Naive thymus-derived CD4-positive, alpha-beta T cell (primary cell): ENCODE measurements at regions of chr4 and their contacts with region 1.

Region 1: GRCh38 chr4:136103616-136104015 is 1428.7 kb downstream of the PCDH18 start:
- DNase-seq: no peak
- ATAC-seq: no peak
- H3K4me3 ChIP-seq: no peak overlapping the region
- H3K4me3 Mint-ChIP-seq: no peak overlapping the region
- H3K27ac ChIP-seq: no peak overlapping the region
- H3K27ac Mint-ChIP-seq: no peak overlapping the region
- H3K4me1 ChIP-seq: no peaks in the 10 kb centered on the region
- H3K4me1 Mint-ChIP-seq: no peaks in the 10 kb centered on the region
- H3K27me3 ChIP-seq: no peaks in the 10 kb centered on the region
- H3K27me3 Mint-ChIP-seq: no peaks in the 10 kb centered on the region

Region 2: GRCh38 chr4:136060768-136061167 is 42.8 kb before region 1 on chr4:
- CTCF ChIA-PET with region 1: no interaction called
- POLR2A ChIA-PET with region 1: no interaction called
- intact Hi-C with region 1: loop called in 1 of 2 experiments (anchors 1 kb)
- DNase-seq: no peak
- ATAC-seq: no peak
- H3K4me3 ChIP-seq: no peak overlapping the region
- H3K4me3 Mint-ChIP-seq: no peak overlapping the region
- H3K27ac ChIP-seq: no peak overlapping the region
- H3K27ac Mint-ChIP-seq: no peak overlapping the region
- H3K4me1 ChIP-seq: no peaks in the 10 kb centered on the region
- H3K4me1 Mint-ChIP-seq: no peaks in the 10 kb centered on the region
- H3K27me3 ChIP-seq: no peaks in the 10 kb centered on the region
- H3K27me3 Mint-ChIP-seq: no peaks in the 10 kb centered on the region

Region 3: GRCh38 chr4:137226898-137227297 is 1123.3 kb after region 1 on chr4:
- CTCF ChIA-PET with region 1: no interaction called
- POLR2A ChIA-PET with region 1: no interaction called
- intact Hi-C with region 1: no loop called
- DNase-seq: no peak
- ATAC-seq: no peak
- H3K4me3 ChIP-seq: no peak overlapping the region
- H3K4me3 Mint-ChIP-seq: no peak overlapping the region
- H3K27ac ChIP-seq: no peak overlapping the region
- H3K27ac Mint-ChIP-seq: no peak overlapping the region
- H3K4me1 ChIP-seq: no peaks in the 10 kb centered on the region
- H3K4me1 Mint-ChIP-seq: no peaks in the 10 kb centered on the region
- H3K27me3 ChIP-seq: no peaks in the 10 kb centered on the region
- H3K27me3 Mint-ChIP-seq: no peaks in the 10 kb centered on the region